ENCODE measurements at regions of chr14 and their contacts with region 1.

Region 1: GRCh38 chr14:104473649-104474494 is 105.7 kb upstream of the C14orf180 start:
- DNase-seq: no peak
- H3K4me3 ChIP-seq: no peak overlapping the region
- H3K27ac ChIP-seq: no peak overlapping the region
- H3K4me1 ChIP-seq: no peaks in the 10 kb centered on the region; a peak in 2 of 7 replicates
- H3K27me3 ChIP-seq: no peaks in the 10 kb centered on the region; a peak in 1 of 7 replicates
- CTCF ChIP-seq: peak in 2 of 3 experiments; percentile 6 to 8; a peak in 1 of 4 replicates
- EP300 ChIP-seq: no peak
- POLR2A ChIP-seq: no peak
- RAD21 ChIP-seq: no peak

Region 2: DNA sequence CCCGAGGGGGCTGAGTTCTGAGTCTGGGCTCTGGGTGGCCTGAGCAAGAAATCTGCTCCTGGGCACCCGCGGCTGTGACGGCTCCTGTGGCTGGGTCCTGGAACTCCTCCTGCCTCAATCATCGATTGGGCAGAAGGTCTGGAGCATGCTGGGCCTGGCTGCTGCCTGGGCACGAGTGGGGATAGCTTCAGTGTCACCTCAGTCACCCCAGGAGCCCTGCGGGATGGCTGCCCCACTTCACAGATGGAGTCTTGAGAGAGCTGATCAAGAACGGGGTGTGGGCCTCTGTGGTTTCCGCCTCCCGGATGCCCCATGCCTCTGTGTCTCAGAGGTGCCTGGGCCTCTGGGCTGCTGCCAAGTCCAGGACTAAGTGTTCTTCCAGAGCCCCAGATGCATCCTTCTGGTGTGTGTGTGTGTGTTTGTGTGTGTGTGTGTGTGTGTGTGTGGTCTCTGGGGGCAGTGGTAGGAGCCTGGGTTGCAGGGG is 79.9 kb before region 1 on chr14:
- CTCF ChIA-PET with region 1: interaction called, 11 read pairs
- POLR2A ChIA-PET with region 1: no interaction called
- DNase-seq: no peak
- H3K4me3 ChIP-seq: no peak overlapping the region
- H3K27ac ChIP-seq: no peak overlapping the region
- H3K4me1 ChIP-seq: no peaks in the 10 kb centered on the region
- H3K27me3 ChIP-seq: no peaks in the 10 kb centered on the region
- CTCF ChIP-seq: no peak
- EP300 ChIP-seq: no peak
- POLR2A ChIP-seq: no peak
- RAD21 ChIP-seq: no peak

Region 3: DNA sequence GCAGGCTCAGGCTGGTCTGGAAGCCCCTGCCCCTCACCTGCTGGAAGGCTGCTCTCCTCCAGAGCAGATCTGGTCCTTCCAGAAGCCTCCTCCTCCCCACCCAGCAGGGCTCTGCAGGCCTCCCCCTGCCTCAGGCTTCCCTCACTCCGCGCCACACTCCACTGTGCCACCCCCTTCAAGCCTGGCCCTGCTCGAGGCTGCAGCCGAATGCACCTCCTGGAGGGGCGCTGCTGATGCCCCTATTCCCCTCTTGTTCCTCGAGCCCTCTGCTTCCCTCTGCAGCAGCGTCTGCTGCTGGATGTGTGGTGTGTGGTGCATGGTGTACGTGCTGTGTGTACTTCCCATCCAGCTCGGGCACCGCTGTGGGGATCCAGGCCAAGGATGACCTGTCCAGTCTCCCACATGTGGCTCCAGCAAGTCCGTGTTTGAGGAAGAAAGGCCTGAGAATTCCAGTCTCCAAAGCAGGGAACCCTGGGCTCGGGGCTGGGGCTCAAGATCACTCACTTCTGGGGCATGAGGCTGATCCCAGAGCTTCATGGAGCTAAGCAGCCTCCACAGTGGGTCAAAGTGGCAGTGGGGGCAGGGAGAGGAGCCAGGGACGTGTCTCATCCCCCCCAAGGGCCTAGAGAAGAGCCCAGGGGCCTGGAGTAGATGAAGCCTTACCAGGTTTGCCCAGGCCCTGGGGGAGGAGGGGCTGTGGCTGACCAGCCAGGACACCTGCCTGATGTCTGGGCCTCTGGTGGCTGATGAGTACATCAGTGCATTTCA is 30.3 kb before region 1 on chr14:
- CTCF ChIA-PET with region 1: interaction called, 17 read pairs
- POLR2A ChIA-PET with region 1: no interaction called
- DNase-seq: peak; percentile 17 to 73
- H3K4me3 ChIP-seq: no peak overlapping the region
- H3K27ac ChIP-seq: no peak overlapping the region
- H3K4me1 ChIP-seq: peaks cover 0 to 13% (median 9%) of the 10 kb centered on the region in 4 experiments; a peak in 6 of 7 replicates
- H3K27me3 ChIP-seq: no peaks in the 10 kb centered on the region; a peak in 1 of 7 replicates
- CTCF ChIP-seq: peak in 2 of 3 experiments; percentile 65 to 70; a peak in 3 of 4 replicates
- EP300 ChIP-seq: no peak
- POLR2A ChIP-seq: no peak
- RAD21 ChIP-seq: peak; percentile 40 to 61

Region 4: GRCh38 chr14:104486222-104486923 is 12.5 kb after region 1 on chr14:
- CTCF ChIA-PET with region 1: interaction called, 20 read pairs
- POLR2A ChIA-PET with region 1: no interaction called
- DNase-seq: no peak
- H3K4me3 ChIP-seq: no peak overlapping the region
- H3K27ac ChIP-seq: no peak overlapping the region
- H3K4me1 ChIP-seq: peaks cover 0 to 3% (median 0%) of the 10 kb centered on the region in 4 experiments; a peak in 1 of 7 replicates
- H3K27me3 ChIP-seq: no peaks in the 10 kb centered on the region; a peak in 1 of 7 replicates
- CTCF ChIP-seq: no peak
- EP300 ChIP-seq: no peak
- POLR2A ChIP-seq: no peak
- RAD21 ChIP-seq: no peak

Region 5: DNA sequence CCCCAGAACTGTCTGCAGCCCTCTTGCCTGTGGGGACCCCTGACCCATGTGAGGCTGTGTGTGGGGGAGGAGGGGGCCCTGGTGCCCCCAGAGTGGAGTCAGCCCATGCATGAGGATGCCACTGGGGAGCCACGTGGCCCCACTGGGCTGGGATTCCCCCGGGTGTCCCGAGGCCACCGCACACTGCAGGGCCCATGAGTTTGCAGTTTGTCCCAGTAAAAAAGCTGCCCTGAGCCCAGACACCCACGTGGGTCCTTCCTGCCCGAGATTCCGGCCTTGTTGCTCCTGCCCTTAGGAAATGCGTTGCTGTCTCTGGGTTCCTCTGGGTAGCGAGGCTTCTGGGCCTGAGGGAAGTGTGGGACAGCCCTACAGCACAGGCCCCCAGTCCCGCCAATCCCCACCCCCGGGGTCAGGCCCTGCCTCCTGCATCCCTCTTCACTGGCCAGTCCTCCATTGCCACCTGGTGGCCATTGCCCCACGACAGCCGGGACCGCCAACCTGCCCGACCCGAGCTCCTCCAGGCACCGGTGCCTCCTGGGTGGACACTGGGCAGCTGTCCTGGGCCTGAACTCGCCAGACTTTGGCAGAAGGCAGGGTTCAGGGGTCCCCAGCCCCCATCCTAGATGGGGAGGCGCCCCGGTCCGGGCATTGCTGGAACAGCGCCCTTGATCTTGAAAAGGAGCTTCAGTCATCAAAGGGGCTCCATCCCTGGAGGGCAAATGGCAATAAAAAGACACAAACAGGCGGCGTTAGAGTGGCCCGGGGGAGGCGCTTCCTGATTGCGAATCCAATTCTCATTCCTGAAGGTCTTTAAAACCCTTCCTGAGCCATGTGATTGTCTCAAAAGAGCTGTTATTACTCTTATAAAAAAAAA is 90.1 kb after region 1 on chr14:
- CTCF ChIA-PET with region 1: interaction called, 10 read pairs
- POLR2A ChIA-PET with region 1: no interaction called
- DNase-seq: peak; percentile 66 to 96
- H3K4me3 ChIP-seq: no peak overlapping the region
- H3K27ac ChIP-seq: no peak overlapping the region
- H3K4me1 ChIP-seq: peaks cover 0 to 6% (median under 1%) of the 10 kb centered on the region in 4 experiments; a peak in 3 of 7 replicates
- H3K27me3 ChIP-seq: no peaks in the 10 kb centered on the region; a peak in 2 of 7 replicates
- CTCF ChIP-seq: peak in 2 of 3 experiments; percentile 90 to 92; a peak in 3 of 4 replicates
- EP300 ChIP-seq: no peak
- POLR2A ChIP-seq: no peak
- RAD21 ChIP-seq: peak; percentile 97